CD8-positive, alpha-beta T cell (primary cell): ENCODE measurements at regions of chr10 and their contacts with region 1.

Region 1: DNA sequence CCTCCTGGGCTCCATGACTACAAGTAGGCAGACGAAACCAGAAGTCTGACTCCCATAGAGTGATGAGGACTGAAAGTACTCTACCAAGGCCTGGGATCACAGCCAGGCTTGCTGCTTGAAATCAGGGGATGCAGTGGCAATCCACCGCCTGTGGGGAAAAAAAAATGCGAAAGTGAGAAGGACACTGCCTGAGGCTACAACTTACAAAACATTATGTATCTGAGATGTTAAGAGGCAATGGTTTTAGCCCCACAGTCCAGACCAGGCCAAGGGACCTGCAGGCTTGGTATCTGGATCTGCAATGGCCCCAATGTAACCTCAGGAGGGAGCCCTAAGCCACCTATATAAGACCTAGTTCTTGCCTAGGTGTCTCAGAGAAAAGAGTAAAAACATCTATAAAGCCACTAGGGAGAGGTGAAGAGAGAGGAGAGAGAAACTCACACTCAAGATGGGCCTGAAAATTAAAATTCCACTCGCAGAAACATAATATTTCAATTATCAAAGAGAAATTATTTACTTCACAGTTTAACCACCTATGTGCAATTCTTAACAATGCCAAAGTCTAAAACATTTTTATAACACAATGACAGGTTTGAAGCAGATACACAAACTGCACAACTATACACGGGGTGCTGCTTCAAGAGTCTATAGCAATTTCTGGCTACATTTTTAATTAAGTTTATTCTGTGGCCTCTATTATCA is 13.9 kb downstream of the DNAJC1 start:
- DNase-seq: peak in 6 of 9 experiments; percentile 3 to 64 (median 22)
- ATAC-seq: peak; percentile 89
- H3K4me3 ChIP-seq: no peak overlapping the region
- H3K4me3 Mint-ChIP-seq: no peak overlapping the region
- H3K27ac ChIP-seq: no peak overlapping the region
- H3K27ac Mint-ChIP-seq: no peak overlapping the region
- H3K4me1 ChIP-seq: no peaks in the 10 kb centered on the region
- H3K4me1 Mint-ChIP-seq: peaks cover 10% of the 10 kb centered on the region
- H3K27me3 ChIP-seq: no peaks in the 10 kb centered on the region
- H3K27me3 Mint-ChIP-seq: no peaks in the 10 kb centered on the region
- CTCF ChIP-seq: peak; percentile 53

Region 2: DNA sequence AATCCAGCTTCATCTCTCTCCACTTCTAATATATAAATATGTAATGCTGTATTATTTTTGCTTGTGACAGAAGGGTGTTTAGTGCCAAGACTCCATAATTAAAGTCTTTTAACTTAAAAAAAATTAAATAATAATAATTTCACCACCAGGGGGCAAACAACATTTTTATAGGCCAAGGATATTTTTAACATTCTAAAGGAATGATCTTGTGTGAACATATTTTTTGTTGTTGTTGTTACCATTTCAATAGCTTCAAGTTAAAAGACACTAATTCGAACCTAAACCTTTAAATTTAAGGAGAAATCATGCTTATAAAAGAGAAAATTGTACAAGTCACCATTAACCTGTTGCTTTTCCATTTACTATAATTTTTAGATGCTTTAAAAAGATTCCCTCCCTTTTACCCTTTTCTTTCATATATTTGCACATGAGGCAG is 21.4 kb after region 1 on chr10:
- CTCF ChIA-PET with region 1: interaction called, 16 read pairs
- POLR2A ChIA-PET with region 1: no interaction called
- intact Hi-C with region 1: loop called in 1 of 2 experiments (anchors 1 kb)
- DNase-seq: peak in 2 of 9 experiments; percentile 33 to 49
- ATAC-seq: no peak
- H3K4me3 ChIP-seq: no peak overlapping the region
- H3K4me3 Mint-ChIP-seq: no peak overlapping the region
- H3K27ac ChIP-seq: no peak overlapping the region
- H3K27ac Mint-ChIP-seq: no peak overlapping the region
- H3K4me1 ChIP-seq: no peaks in the 10 kb centered on the region
- H3K4me1 Mint-ChIP-seq: no peaks in the 10 kb centered on the region
- H3K27me3 ChIP-seq: no peaks in the 10 kb centered on the region
- H3K27me3 Mint-ChIP-seq: peaks cover 1% of the 10 kb centered on the region
- CTCF ChIP-seq: peak; percentile 63

Region 3: GRCh38 chr10:22420787-22421517 is 431.3 kb after region 1 on chr10:
- CTCF ChIA-PET with region 1: interaction called, 5 read pairs
- POLR2A ChIA-PET with region 1: no interaction called
- intact Hi-C with region 1: loop called (anchors 1 kb)
- DNase-seq: peak in 3 of 9 experiments; percentile 8 to 56 (median 33)
- ATAC-seq: peak; percentile 49
- H3K4me3 ChIP-seq: no peak overlapping the region
- H3K4me3 Mint-ChIP-seq: no peak overlapping the region
- H3K27ac ChIP-seq: no peak overlapping the region
- H3K27ac Mint-ChIP-seq: no peak overlapping the region
- H3K4me1 ChIP-seq: no peaks in the 10 kb centered on the region
- H3K4me1 Mint-ChIP-seq: no peaks in the 10 kb centered on the region
- H3K27me3 ChIP-seq: no peaks in the 10 kb centered on the region
- H3K27me3 Mint-ChIP-seq: peaks cover 5% of the 10 kb centered on the region
- CTCF ChIP-seq: peak; percentile 37

Region 4: DNA sequence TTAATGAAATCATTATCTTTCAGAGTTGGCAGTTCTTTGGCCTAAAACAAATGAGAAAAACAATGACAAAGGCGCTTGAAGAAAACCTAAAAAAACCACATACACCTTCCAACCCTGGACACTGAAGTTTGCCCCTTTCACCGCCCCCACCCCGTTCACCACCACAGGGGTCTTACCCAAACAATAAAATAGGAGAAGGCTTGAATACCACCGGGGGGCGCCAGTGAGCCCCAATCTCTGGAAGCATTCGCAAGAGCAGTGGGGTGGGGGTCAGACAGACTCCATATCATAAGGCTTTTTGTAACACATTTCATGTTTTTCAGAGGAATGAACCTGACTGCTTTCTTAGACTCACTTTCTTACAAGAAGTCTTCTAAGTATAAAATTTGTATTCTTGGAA is 561.1 kb after region 1 on chr10:
- CTCF ChIA-PET with region 1: interaction called, 14 read pairs
- POLR2A ChIA-PET with region 1: interaction called, 3 read pairs
- intact Hi-C with region 1: loop called in 1 of 2 experiments (anchors 5 kb)
- DNase-seq: peak; percentile 37 to 83 (median 75)
- ATAC-seq: peak; percentile 79
- H3K4me3 ChIP-seq: no peak overlapping the region
- H3K4me3 Mint-ChIP-seq: no peak overlapping the region
- H3K27ac ChIP-seq: no peak overlapping the region
- H3K27ac Mint-ChIP-seq: peak overlapping the region; percentile 67
- H3K4me1 ChIP-seq: no peaks in the 10 kb centered on the region
- H3K4me1 Mint-ChIP-seq: peaks cover 30% of the 10 kb centered on the region
- H3K27me3 ChIP-seq: no peaks in the 10 kb centered on the region
- H3K27me3 Mint-ChIP-seq: no peaks in the 10 kb centered on the region
- CTCF ChIP-seq: peak; percentile 81

Region 5: GRCh38 chr10:22573820-22574569 is 584.4 kb after region 1 on chr10:
- CTCF ChIA-PET with region 1: interaction called, 19 read pairs
- POLR2A ChIA-PET with region 1: no interaction called
- intact Hi-C with region 1: loop called in 1 of 2 experiments (anchors 5 kb)
- DNase-seq: peak in 7 of 9 experiments; percentile 2 to 82 (median 43)
- ATAC-seq: peak; percentile 64
- H3K4me3 ChIP-seq: no peak overlapping the region
- H3K4me3 Mint-ChIP-seq: peak overlapping the region; percentile 71
- H3K27ac ChIP-seq: peak overlapping the region in 1 of 2 experiments; percentile 63
- H3K27ac Mint-ChIP-seq: peak overlapping the region; percentile 94
- H3K4me1 ChIP-seq: peaks cover 35% of the 10 kb centered on the region
- H3K4me1 Mint-ChIP-seq: peaks cover 73% of the 10 kb centered on the region
- H3K27me3 ChIP-seq: no peaks in the 10 kb centered on the region
- H3K27me3 Mint-ChIP-seq: no peaks in the 10 kb centered on the region
- CTCF ChIP-seq: peak; percentile 79

Region 6: GRCh38 chr10:23067939-23068775 is 1078.6 kb after region 1 on chr10:
- CTCF ChIA-PET with region 1: interaction called, 4 read pairs
- POLR2A ChIA-PET with region 1: no interaction called
- intact Hi-C with region 1: loop called (anchors 1 kb)
- DNase-seq: peak; percentile 14 to 76 (median 68)
- ATAC-seq: peak; percentile 48
- H3K4me3 ChIP-seq: no peak overlapping the region
- H3K4me3 Mint-ChIP-seq: no peak overlapping the region
- H3K27ac ChIP-seq: no peak overlapping the region
- H3K27ac Mint-ChIP-seq: no peak overlapping the region
- H3K4me1 ChIP-seq: no peaks in the 10 kb centered on the region
- H3K4me1 Mint-ChIP-seq: peaks cover 1% of the 10 kb centered on the region
- H3K27me3 ChIP-seq: no peaks in the 10 kb centered on the region
- H3K27me3 Mint-ChIP-seq: peaks cover 17% of the 10 kb centered on the region
- CTCF ChIP-seq: peak; percentile 77

Region 7: GRCh38 chr10:23702977-23703414 is 1713.4 kb after region 1 on chr10:
- CTCF ChIA-PET with region 1: no interaction called
- POLR2A ChIA-PET with region 1: no interaction called
- intact Hi-C with region 1: loop called in 1 of 2 experiments (anchors 5 kb)
- DNase-seq: peak in 8 of 9 experiments; percentile 19 to 72 (median 51)
- ATAC-seq: peak; percentile 57
- H3K4me3 ChIP-seq: no peak overlapping the region
- H3K4me3 Mint-ChIP-seq: no peak overlapping the region
- H3K27ac ChIP-seq: no peak overlapping the region
- H3K27ac Mint-ChIP-seq: no peak overlapping the region
- H3K4me1 ChIP-seq: no peaks in the 10 kb centered on the region
- H3K4me1 Mint-ChIP-seq: peaks cover 6% of the 10 kb centered on the region
- H3K27me3 ChIP-seq: no peaks in the 10 kb centered on the region
- H3K27me3 Mint-ChIP-seq: peaks cover 16% of the 10 kb centered on the region
- CTCF ChIP-seq: peak; percentile 60